Esophagus squamous epithelium (tissue), 5 donors: ENCODE measurements at regions of chr9 and their contacts with region 1.

Region 1: GRCh38 chr9:122464633-122465567 is 12.8 kb downstream of the OR1J1 start:
- DNase-seq: peak; percentile 26
- H3K4me3 ChIP-seq: peak overlapping the region; percentile 20 to 63 (median 43)
- H3K27ac ChIP-seq: peak overlapping the region; percentile 16 to 56 (median 34)
- H3K4me1 ChIP-seq: peaks cover 0 to 22% (median 14%) of the 10 kb centered on the region in 3 donors
- H3K27me3 ChIP-seq: no peaks in the 10 kb centered on the region
- CTCF ChIP-seq: peak; percentile 83 to 88 (median 86)
- POLR2A ChIP-seq: no peak

Region 2: GRCh38 chr9:122418016-122418415 is 46.9 kb before region 1 on chr9:
- intact Hi-C with region 1: no loop called
- DNase-seq: no peak
- H3K4me3 ChIP-seq: no peak overlapping the region
- H3K27ac ChIP-seq: no peak overlapping the region
- H3K4me1 ChIP-seq: peaks cover 0 to 10% (median 0%) of the 10 kb centered on the region in 3 donors
- H3K27me3 ChIP-seq: no peaks in the 10 kb centered on the region
- CTCF ChIP-seq: no peak
- POLR2A ChIP-seq: no peak

Region 3: DNA sequence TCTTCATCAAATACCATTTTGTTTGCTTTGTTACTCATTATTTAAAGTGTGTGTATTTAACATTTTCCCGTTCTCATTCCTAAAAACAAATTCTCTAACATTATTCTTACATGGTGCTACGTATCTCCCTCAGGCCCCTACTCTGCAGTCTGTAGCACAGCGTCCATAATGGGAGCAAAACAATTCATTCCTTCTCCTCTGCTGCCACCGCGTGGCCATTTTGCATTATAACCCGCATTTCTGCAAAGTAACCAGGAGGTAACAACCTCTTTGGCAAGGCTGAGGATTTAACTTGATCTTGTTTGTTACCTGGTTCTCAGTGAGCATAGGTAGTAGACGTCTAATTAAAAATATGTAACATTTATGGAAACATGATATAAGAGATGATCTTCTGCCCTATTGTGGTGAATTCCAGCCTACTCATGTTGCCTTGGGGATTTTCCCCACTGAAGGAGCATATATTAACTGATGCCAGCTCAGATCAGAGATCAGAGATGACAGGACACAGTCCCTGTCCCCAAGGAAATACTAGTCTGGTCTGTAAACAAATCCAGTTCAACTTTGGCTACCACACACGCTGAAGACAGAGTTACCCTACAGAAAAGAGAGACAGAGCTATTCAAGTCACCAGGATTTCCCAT is 345.5 kb after region 1 on chr9:
- intact Hi-C with region 1: loop called (anchors 5 kb)
- DNase-seq: no peak
- H3K4me3 ChIP-seq: peak overlapping the region in 1 of 4 donors; percentile 0
- H3K27ac ChIP-seq: no peak overlapping the region
- H3K4me1 ChIP-seq: peaks cover 2 to 34% (median 7%) of the 10 kb centered on the region in 3 donors
- H3K27me3 ChIP-seq: no peaks in the 10 kb centered on the region
- CTCF ChIP-seq: peak; percentile 45 to 87 (median 83)
- POLR2A ChIP-seq: no peak